Activated T-helper 1 cell treated with anti-CD3 and anti-CD28 coated beads, Interleukin-12 subunit alpha, Interleukin-12 subunit beta, Interleukin-2, Interleukin-4 antibody, amounts not matched to agents 30 ng/mL and 10 ng/mL and 1 ng/mL, durations not matched to agents 14 hours and 24 hours and 36 hours (primary cell): ENCODE measurements at regions of chrX and their contacts with region 1.

Region 1: GRCh38 chrX:124217304-124218251 is 114.9 kb upstream of the TEX13D start:
- DNase-seq: peak; percentile 56
- H3K4me3 Mint-ChIP-seq: peak overlapping the region; percentile 79
- H3K27ac Mint-ChIP-seq: peak overlapping the region; percentile 93
- H3K4me1 Mint-ChIP-seq: peaks cover 76% of the 10 kb centered on the region
- H3K27me3 Mint-ChIP-seq: peaks cover 2% of the 10 kb centered on the region

Region 2: DNA sequence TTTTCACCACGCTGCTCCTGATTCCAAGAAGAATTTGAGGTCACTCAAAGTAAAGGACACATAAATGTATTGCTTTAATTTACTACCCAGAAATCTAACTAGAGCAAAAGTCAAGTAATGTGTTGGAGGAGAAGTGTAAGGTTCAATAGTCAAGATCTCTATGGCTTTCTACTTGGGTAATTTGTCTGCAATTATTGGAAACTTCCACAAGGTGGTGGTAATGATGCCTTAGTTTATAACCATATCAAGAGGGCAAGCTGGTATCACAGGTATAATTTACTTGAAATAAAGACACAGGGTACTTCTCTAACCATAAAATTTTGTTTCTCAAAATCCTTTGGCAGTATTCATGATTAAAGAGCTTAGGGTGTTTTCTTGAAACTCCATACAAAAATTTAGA is 1043.7 kb before region 1 on chrX:
- intact Hi-C with region 1: no loop called
- DNase-seq: no peak
- H3K4me3 Mint-ChIP-seq: no peak overlapping the region
- H3K27ac Mint-ChIP-seq: no peak overlapping the region
- H3K4me1 Mint-ChIP-seq: no peaks in the 10 kb centered on the region
- H3K27me3 Mint-ChIP-seq: no peaks in the 10 kb centered on the region

Region 3: GRCh38 chrX:124030520-124030919 is 187.1 kb before region 1 on chrX:
- intact Hi-C with region 1: no loop called
- DNase-seq: no peak
- H3K4me3 Mint-ChIP-seq: no peak overlapping the region
- H3K27ac Mint-ChIP-seq: no peak overlapping the region
- H3K4me1 Mint-ChIP-seq: peaks cover 6% of the 10 kb centered on the region
- H3K27me3 Mint-ChIP-seq: no peaks in the 10 kb centered on the region

Region 4: DNA sequence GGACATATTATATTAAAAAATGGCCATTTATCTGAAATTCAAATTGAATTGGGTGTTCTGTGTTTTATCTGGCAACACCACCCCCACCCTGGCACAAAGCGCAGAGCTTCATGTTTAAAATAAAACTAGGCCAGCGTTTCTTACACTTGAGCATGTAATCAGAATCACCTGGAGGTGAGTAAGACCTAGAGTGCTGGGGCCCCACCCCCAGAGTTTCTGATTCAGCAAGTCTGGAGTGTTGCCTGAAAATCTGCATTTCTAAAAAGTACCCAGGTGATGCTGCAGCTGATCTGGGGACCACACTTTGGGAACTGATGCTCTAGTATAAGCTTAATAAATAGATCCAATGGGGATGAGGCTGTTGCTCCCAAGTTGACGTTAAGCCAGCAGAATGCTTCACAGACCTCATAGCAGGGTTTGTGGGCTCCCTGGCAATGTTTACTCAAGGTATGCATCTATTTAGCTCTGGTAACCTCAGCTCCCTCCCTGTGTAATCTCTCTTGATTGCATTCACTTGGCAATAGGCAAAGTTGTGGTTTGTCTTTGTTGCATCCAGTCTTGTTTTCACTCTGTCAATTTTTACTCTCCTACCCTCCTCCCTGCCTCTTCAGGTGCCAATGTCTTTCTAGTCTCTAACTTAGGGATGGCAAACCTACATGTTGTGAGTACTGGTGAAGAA is 15.1 kb after region 1 on chrX:
- intact Hi-C with region 1: loop called (anchors 1 kb)
- DNase-seq: no peak
- H3K4me3 Mint-ChIP-seq: no peak overlapping the region
- H3K27ac Mint-ChIP-seq: no peak overlapping the region
- H3K4me1 Mint-ChIP-seq: peaks cover 14% of the 10 kb centered on the region
- H3K27me3 Mint-ChIP-seq: peaks cover 2% of the 10 kb centered on the region

Region 5: DNA sequence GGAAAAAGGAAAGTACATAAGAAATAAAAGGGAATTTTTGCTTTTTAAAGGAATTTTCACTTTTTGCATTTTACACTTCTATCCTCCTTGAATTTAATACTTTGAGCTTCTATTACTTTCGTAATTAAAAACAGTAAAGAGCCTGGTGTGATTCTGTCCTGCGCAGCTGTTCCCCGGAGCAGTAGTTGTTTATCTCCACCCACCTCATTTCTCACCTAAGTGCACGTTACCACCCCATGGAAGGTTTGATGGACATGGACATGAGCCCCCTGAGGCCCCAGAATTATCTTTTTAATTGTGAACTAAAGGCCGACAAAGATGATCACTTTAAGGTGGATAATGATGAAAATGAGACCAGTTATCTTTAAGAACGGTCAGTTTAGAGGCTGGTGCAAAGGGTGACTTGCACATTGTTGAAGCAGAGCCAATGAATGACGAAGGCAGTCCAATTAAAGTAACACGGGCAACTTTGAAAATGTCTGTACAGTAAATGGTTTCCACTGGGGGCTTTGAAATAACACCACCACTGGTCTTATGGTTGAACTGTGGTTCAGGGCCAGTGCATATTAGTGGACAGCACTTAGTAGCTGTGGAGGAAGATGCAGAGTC is 62.8 kb after region 1 on chrX:
- intact Hi-C with region 1: loop called (anchors 5 kb)
- DNase-seq: no peak
- H3K4me3 Mint-ChIP-seq: no peak overlapping the region
- H3K27ac Mint-ChIP-seq: peak overlapping the region; percentile 69
- H3K4me1 Mint-ChIP-seq: peaks cover 19% of the 10 kb centered on the region
- H3K27me3 Mint-ChIP-seq: no peaks in the 10 kb centered on the region

Region 6: GRCh38 chrX:124300405-124300804 is 82.8 kb after region 1 on chrX:
- intact Hi-C with region 1: loop called (anchors 1 kb)
- DNase-seq: no peak
- H3K4me3 Mint-ChIP-seq: peak overlapping the region; percentile 9
- H3K27ac Mint-ChIP-seq: peak overlapping the region; percentile 68
- H3K4me1 Mint-ChIP-seq: peaks cover 17% of the 10 kb centered on the region
- H3K27me3 Mint-ChIP-seq: no peaks in the 10 kb centered on the region

Region 7: GRCh38 chrX:124358800-124359383 is 141.3 kb after region 1 on chrX:
- intact Hi-C with region 1: loop called (anchors 1 kb)
- DNase-seq: no peak
- H3K4me3 Mint-ChIP-seq: peak overlapping the region; percentile 72
- H3K27ac Mint-ChIP-seq: peak overlapping the region; percentile 90
- H3K4me1 Mint-ChIP-seq: peaks cover 60% of the 10 kb centered on the region
- H3K27me3 Mint-ChIP-seq: no peaks in the 10 kb centered on the region

Region 8: DNA sequence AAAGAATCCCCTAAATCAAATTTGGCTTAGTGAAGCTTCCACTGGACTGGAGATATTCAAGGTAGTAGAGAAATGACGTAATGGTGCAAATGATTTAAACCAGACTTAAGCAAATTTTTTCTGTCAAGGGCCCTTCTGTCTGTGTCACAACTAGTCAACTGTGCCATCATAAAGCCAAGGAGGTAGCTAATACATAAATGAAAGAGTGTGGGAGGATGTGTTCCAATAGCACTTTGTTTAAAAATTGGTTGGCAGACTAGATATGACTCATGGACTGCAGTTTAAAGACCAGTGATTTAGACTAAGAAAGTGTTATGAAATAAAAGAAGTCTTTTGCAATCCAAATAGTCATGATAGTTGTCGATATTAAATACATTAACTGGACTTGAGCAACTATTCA is 1077.8 kb after region 1 on chrX:
- intact Hi-C with region 1: loop called (anchors 2 kb)
- DNase-seq: no peak
- H3K4me3 Mint-ChIP-seq: peak overlapping the region; percentile 3
- H3K27ac Mint-ChIP-seq: peak overlapping the region; percentile 61
- H3K4me1 Mint-ChIP-seq: peaks cover 18% of the 10 kb centered on the region
- H3K27me3 Mint-ChIP-seq: no peaks in the 10 kb centered on the region